ENCODE measurements at regions of chr1 and their contacts with region 1.

Region 1: DNA sequence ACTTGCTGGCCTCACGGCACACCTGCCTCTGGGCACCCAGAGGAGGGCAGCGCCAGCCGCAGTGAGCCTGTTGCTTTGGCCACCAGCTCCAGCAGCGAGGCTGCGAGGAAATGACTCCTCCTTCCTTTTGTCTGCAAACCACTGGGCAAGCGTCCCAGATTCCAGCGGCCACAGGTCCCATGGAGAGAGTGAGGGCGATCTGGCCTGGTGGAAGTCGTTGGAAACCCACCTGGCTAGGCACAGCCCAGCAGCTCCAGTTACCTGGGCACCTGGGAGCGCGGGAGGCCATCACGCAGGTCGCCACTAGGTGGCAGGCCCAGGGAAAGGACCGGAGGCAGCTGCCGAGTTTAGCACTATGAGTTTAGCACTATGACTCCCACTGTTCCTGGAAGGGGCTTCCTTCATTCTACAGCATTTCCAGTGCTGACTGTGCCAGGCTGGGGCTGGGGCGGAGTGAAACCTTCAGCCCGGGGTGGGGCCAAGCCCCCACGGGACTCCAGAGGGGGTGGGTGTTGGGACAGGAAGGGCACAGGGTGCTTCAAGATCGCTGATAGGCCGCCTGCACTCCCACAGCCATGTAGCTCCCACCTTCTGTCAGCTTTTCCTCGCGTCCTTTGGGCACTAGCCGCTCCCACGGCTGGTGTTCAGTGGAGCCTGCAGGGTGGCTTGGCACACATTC is 1.1 kb upstream of the ESPN start:
- DNase-seq: peak; percentile 83
- H3K4me3 Mint-ChIP-seq: peak overlapping the region; percentile 20
- H3K27ac Mint-ChIP-seq: no peak overlapping the region
- H3K4me1 Mint-ChIP-seq: peaks cover 17% of the 10 kb centered on the region
- H3K27me3 Mint-ChIP-seq: peaks cover 41% of the 10 kb centered on the region

Region 2: DNA sequence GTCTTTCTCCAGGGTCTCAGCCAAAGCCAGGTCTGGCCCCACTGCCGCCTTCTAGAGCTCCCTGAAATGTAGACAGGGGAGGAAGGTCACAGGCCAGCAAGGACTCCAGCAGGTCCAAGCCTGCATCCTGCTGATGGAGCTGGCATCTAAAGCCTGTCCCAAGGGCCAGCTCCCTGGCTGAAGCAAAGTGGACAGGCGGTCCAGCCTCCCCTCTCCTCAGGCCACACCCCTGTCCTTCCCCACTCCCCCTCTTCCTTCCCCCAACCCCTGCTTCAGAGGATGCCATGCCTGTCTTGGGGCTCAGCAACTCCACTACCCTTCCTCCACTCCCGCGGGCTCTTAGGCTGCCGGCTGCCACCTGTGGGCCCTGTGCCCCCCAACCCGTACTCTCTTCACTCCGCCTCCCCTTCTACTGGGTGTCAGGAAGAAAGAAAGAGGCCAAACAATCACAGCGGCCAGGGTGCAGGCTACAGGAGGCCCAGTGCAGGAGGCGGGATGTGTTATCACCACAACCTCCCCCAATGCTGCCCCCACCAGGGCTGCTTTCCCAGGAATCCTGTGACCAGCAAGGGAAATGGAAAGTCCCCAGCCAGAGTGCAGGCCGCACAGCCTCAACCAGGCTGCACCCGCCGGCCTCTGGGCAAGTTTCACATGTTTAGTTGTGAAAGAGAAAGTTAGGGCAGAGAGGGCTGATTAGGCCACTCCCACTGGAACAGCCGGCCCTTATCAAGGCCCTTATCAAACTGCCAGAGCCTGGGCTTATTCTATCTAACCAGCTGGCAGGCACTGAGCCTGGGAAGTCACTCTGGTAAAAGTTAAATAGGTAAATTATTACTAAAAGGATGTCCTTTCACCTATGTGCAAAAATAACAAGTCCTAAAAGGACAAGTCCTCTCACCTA is 64.0 kb before region 1 on chr1:
- CTCF ChIA-PET with region 1: interaction called, 22 read pairs
- POLR2A ChIA-PET with region 1: no interaction called
- intact Hi-C with region 1: no loop called
- DNase-seq: peak; percentile 74
- H3K4me3 Mint-ChIP-seq: peak overlapping the region; percentile 55
- H3K27ac Mint-ChIP-seq: peak overlapping the region; percentile 90
- H3K4me1 Mint-ChIP-seq: peaks cover 42% of the 10 kb centered on the region
- H3K27me3 Mint-ChIP-seq: no peaks in the 10 kb centered on the region

Region 3: DNA sequence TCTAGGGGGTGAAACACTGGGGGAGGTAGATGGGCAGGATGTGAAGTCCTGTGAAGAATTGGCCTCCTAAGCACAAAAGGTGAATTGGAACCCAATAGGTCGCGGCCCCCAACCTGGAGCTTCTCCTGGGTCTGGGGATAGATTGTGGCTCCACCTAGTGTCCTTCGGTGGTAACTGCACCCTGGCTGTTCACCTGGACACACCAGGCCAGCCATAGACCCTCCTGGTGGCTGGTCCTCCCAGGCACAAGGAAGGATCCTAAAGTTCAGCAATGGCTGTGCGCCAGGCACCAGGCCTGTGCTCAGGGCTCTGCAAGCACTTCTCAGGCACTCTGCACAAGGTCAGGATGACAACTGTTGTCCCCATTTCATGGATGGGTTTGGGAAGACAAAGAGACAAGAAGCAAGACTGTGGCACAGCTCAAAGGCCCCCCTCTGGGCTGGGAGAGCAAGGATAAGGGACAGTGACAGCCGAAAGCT is 14.6 kb after region 1 on chr1:
- CTCF ChIA-PET with region 1: interaction called, 106 read pairs
- POLR2A ChIA-PET with region 1: no interaction called
- intact Hi-C with region 1: loop called (anchors 2 kb)
- DNase-seq: peak; percentile 82
- H3K4me3 Mint-ChIP-seq: no peak overlapping the region
- H3K27ac Mint-ChIP-seq: no peak overlapping the region
- H3K4me1 Mint-ChIP-seq: peaks cover 6% of the 10 kb centered on the region
- H3K27me3 Mint-ChIP-seq: peaks cover 19% of the 10 kb centered on the region

Region 4: DNA sequence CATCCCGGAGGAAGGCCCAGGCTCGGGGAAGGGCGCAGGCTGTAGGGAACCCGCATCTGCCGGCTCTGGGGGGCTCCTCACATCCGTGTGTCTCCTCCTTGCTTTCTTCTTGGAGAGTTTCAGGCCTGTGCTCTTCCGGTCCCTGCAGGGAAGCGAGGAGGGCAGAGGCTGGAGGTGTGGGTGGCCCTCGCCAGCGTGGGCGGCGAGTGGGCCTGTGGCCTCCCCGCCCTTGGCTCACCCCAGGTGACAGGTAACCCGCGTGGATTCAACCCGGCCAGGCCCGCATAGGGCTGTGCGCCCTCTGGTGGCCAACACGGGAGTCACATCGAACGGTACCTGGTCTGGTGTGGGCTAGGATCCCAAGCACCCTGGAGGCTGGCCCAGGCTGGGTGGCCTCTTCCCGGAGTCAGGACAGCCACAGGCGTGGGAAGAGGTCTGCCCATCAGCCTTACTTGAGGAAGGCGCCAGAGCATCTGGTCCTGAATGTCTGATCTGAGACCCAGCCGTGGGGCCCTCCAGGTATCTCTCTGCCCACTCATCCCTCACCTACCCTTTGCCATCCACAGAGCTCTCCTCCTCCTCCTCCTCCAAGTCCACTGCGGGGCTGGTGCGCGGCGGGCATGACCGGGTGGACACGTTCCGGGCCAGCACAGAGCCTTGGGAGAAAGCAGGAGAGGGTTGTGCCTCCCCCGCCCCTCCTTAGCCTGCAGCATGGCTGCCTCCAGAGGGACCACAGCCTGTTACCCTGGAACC is 52.1 kb after region 1 on chr1:
- CTCF ChIA-PET with region 1: interaction called, 15 read pairs
- POLR2A ChIA-PET with region 1: no interaction called
- intact Hi-C with region 1: no loop called
- DNase-seq: peak; percentile 82
- H3K4me3 Mint-ChIP-seq: no peak overlapping the region
- H3K27ac Mint-ChIP-seq: no peak overlapping the region
- H3K4me1 Mint-ChIP-seq: peaks cover 6% of the 10 kb centered on the region
- H3K27me3 Mint-ChIP-seq: no peaks in the 10 kb centered on the region

Region 5: GRCh38 chr1:6646499-6647148 is 223.2 kb after region 1 on chr1:
- CTCF ChIA-PET with region 1: interaction called, 4 read pairs
- POLR2A ChIA-PET with region 1: no interaction called
- intact Hi-C with region 1: loop called (anchors 5 kb)
- DNase-seq: peak; percentile 34
- H3K4me3 Mint-ChIP-seq: no peak overlapping the region
- H3K27ac Mint-ChIP-seq: no peak overlapping the region
- H3K4me1 Mint-ChIP-seq: no peaks in the 10 kb centered on the region
- H3K27me3 Mint-ChIP-seq: no peaks in the 10 kb centered on the region

Measured in activated CD4-positive, alpha-beta memory T cell treated with anti-CD3 and anti-CD28 coated beads for 36 hours (primary cell).